ENCODE measurements at regions of chr11 and their contacts with region 1.

Region 1: GRCh38 chr11:62340269-62340901 is 3.1 kb downstream of the ASRGL1 start:
- DNase-seq: peak; percentile 87
- H3K4me3 Mint-ChIP-seq: no peak overlapping the region
- H3K27ac Mint-ChIP-seq: no peak overlapping the region
- H3K4me1 Mint-ChIP-seq: peaks cover 12% of the 10 kb centered on the region
- H3K27me3 Mint-ChIP-seq: peaks cover 25% of the 10 kb centered on the region

Region 2: GRCh38 chr11:61671527-61671926 is 668.9 kb before region 1 on chr11:
- intact Hi-C with region 1: no loop called
- DNase-seq: no peak
- H3K4me3 Mint-ChIP-seq: no peak overlapping the region
- H3K27ac Mint-ChIP-seq: no peak overlapping the region
- H3K4me1 Mint-ChIP-seq: no peaks in the 10 kb centered on the region
- H3K27me3 Mint-ChIP-seq: peaks cover 28% of the 10 kb centered on the region

Region 3: GRCh38 chr11:62147545-62147944 is 192.8 kb before region 1 on chr11:
- intact Hi-C with region 1: no loop called
- DNase-seq: no peak
- H3K4me3 Mint-ChIP-seq: no peak overlapping the region
- H3K27ac Mint-ChIP-seq: no peak overlapping the region
- H3K4me1 Mint-ChIP-seq: no peaks in the 10 kb centered on the region
- H3K27me3 Mint-ChIP-seq: no peaks in the 10 kb centered on the region

Region 4: DNA sequence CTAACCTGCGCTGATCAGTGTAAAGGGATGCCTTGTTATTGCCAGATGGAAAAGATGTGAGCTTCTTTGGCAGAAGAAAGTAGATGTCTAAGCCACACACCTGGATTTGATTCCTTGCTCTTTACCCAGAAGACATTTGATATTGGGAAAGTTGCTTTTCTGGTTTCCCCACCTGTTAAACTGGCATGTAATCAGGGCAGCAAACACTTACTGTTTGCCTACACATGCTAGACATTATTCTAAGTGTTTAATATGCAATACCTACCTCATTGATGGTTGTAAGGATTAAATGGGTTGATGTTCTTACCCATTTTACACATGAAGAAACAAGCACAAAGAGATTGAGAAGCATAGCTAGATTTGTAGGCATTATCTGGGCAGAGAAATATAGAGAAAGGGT is 13.5 kb after region 1 on chr11:
- intact Hi-C with region 1: no loop called
- DNase-seq: no peak
- H3K4me3 Mint-ChIP-seq: no peak overlapping the region
- H3K27ac Mint-ChIP-seq: no peak overlapping the region
- H3K4me1 Mint-ChIP-seq: peaks cover 8% of the 10 kb centered on the region
- H3K27me3 Mint-ChIP-seq: no peaks in the 10 kb centered on the region

Region 5: GRCh38 chr11:62372871-62373270 is 32.5 kb after region 1 on chr11:
- intact Hi-C with region 1: loop called (anchors 1 kb)
- DNase-seq: peak; percentile 69
- H3K4me3 Mint-ChIP-seq: no peak overlapping the region
- H3K27ac Mint-ChIP-seq: no peak overlapping the region
- H3K4me1 Mint-ChIP-seq: peaks cover 12% of the 10 kb centered on the region
- H3K27me3 Mint-ChIP-seq: no peaks in the 10 kb centered on the region

Region 6: DNA sequence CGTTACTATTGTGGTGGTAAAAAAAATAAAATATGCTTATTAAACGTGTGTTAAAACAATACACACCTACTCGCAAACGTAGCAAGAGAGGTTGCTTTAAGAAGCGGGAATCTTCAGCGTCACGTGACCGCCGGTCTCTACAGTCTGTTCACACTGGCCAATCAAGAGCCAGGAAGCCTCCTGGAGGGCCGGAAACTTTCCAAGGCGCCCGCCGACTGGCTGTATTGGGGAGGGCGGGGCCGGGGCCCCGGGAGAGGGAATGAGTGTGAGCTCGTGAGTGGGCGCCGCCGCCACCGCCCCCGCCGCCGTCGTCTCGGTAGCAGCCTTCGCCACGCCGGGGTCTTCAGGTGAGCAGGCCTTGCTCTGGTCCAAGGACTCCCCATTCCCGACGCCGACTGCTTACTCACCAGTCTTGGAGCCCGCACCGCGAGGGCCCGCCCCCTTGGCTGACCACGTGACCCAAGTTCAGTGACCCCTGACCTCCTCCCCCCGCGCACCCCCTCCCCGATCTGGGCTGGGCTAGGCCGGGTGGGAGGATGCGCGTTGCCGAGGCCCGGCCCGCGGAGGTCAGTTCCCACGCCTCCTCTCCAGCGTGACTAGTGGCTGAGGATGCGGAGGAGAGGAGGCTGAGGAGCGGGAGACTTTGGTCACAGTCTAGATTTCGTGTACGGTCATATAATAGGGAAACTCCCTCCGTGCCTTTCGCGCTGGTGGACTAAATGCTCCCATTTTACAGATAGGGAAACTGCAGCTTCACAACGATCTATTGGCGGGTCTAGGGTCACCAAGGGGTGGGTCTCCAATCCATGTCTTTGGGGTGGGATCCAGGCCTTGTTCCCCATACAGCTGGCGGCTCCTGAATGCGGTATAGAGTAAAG is 431.0 kb after region 1 on chr11 and contains the start of gene TAF6L:
- intact Hi-C with region 1: no loop called
- DNase-seq: peak; percentile 98
- H3K4me3 Mint-ChIP-seq: peak within 1 kb of the TSS; percentile 93
- H3K27ac Mint-ChIP-seq: peak within 1 kb of the TSS; percentile 96
- H3K4me1 Mint-ChIP-seq: peaks cover 26% of the 10 kb centered on the region
- H3K27me3 Mint-ChIP-seq: no peaks in the 10 kb centered on the region
- total RNA-seq, gene TAF6L: 20.1 and 20.2 TPM in 2 replicates